GM23248 (cell line): ENCODE measurements at regions of chr15 and their contacts with region 1.

Region 1: GRCh38 chr15:60179786-60180391 is 175.8 kb downstream of the FOXB1 start:
- DNase-seq: peak; percentile 70
- H3K4me3 ChIP-seq: no peak overlapping the region
- H3K27ac ChIP-seq: no peak overlapping the region
- H3K4me1 ChIP-seq: no peaks in the 10 kb centered on the region
- H3K27me3 ChIP-seq: peaks cover 52% of the 10 kb centered on the region

Region 2: GRCh38 chr15:59741274-59741906 is 438.5 kb before region 1 on chr15:
- in situ Hi-C with region 1: loop called (anchors 25 kb)
- DNase-seq: peak; percentile 38
- H3K4me3 ChIP-seq: no peak overlapping the region
- H3K27ac ChIP-seq: no peak overlapping the region
- H3K4me1 ChIP-seq: no peaks in the 10 kb centered on the region
- H3K27me3 ChIP-seq: peaks cover 25% of the 10 kb centered on the region

Region 3: GRCh38 chr15:60017538-60018520 is 162.1 kb before region 1 on chr15:
- in situ Hi-C with region 1: no loop called
- DNase-seq: no peak
- H3K4me3 ChIP-seq: no peak overlapping the region
- H3K27ac ChIP-seq: no peak overlapping the region
- H3K4me1 ChIP-seq: no peaks in the 10 kb centered on the region
- H3K27me3 ChIP-seq: peaks cover 12% of the 10 kb centered on the region